ENCODE measurements at regions of chr2 and their contacts with region 1.

Region 1: DNA sequence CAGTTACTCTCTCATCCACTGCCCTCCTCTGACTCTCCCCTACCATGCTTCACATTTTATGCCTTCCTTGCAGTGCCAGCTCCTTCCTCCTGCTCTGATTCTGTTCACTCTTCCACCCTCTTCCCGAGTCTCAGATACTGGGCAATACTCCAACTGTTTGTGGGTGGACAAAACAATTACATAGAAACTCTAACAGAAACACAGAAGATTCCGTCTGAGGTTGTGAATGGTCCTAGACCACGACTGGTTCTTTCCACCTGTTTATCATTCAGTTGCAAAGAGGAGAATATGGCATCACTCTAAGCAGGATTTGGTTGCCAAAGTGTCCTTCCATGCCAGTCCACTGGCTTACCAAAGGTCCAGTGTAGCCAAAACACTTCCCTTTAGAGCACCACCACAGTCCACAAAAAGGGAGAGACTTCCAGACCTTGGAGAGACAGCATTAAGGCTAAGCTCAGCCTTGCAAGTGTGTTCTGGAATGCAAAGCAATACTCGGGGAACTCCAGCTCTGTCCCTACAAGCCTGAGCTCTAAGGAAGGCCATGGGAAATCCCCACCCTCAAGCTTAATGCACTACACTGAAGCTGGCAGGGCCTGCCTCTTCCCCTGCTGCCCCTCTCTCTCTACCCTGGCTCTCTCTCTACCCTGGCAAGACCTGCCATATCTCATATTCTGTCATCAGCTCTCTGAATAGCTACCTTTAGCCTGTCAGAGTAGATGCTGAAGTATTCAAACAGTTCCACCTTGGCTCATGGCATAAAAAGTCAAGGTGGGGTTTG is 33.6 kb upstream of the RND3 start:
- DNase-seq: no peak
- ATAC-seq: no peak
- H3K4me3 ChIP-seq: no peak overlapping the region
- H3K4me3 Mint-ChIP-seq: no peak overlapping the region
- H3K27ac ChIP-seq: no peak overlapping the region
- H3K27ac Mint-ChIP-seq: no peak overlapping the region
- H3K4me1 ChIP-seq: no peaks in the 10 kb centered on the region
- H3K4me1 Mint-ChIP-seq: no peaks in the 10 kb centered on the region
- H3K27me3 ChIP-seq: no peaks in the 10 kb centered on the region
- H3K27me3 Mint-ChIP-seq: no peaks in the 10 kb centered on the region

Region 2: GRCh38 chr2:150507071-150507470 is 14.0 kb before region 1 on chr2:
- CTCF ChIA-PET with region 1: interaction called, 3 to 10 read pairs
- POLR2A ChIA-PET with region 1: no interaction called
- DNase-seq: no peak
- ATAC-seq: no peak
- H3K4me3 ChIP-seq: no peak overlapping the region
- H3K4me3 Mint-ChIP-seq: no peak overlapping the region
- H3K27ac ChIP-seq: no peak overlapping the region
- H3K27ac Mint-ChIP-seq: no peak overlapping the region
- H3K4me1 ChIP-seq: no peaks in the 10 kb centered on the region
- H3K4me1 Mint-ChIP-seq: no peaks in the 10 kb centered on the region
- H3K27me3 ChIP-seq: no peaks in the 10 kb centered on the region
- H3K27me3 Mint-ChIP-seq: peaks cover 0 to 3% of the 10 kb centered on the region in 2 donors

Measured in T-cell (primary cell).